ENCODE measurements at regions of chr1 and their contacts with region 1.

Region 1: DNA sequence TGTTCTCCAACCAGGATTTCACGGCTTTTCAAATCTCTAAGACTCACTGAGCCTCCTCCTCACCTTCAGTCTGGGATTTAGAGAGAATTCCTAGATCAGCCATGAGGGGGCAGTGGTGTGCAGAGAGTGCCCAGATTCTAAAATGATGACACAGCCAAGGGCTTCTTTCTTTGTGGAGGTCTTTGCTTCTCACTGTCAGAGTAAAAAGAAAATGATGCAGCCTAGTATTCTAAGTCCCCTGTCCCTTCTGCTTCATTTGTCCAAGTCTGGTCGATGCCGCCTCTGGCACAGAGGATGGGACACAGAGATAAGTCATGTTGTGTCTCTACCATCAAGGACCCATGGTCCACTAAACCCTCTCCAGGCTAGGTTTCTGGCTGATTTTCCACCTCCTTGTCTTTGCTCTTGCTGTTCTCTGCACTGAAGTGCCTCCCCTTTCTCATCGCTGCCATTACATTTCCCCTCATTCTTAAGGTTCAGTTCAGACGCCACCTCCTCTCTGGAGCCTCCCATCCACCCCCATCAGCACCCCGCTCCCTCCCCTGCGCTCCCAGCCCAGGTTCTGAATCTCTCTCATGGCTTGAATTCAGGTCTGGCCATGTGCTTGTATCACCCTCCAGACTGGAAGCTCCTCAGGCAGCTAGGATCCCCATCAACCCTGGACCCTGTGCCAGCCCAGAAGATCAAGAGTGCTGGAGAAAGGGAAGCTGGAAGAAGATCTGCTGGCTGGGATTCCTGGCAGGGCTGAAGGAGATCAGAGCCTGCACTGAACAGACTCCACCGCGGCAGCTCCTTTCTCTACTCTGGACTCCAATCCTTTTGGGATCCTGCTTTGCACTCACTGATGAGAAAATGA is 12.0 kb upstream of the TINAGL1 start:
- DNase-seq: peak; percentile 79
- H3K4me3 ChIP-seq: no peak overlapping the region
- H3K27ac ChIP-seq: no peak overlapping the region
- H3K4me1 ChIP-seq: peaks cover 0 to 6% of the 10 kb centered on the region in 2 experiments; a peak in 1 of 4 replicates
- H3K27me3 ChIP-seq: no peaks in the 10 kb centered on the region
- CTCF ChIP-seq: peak; percentile 90
- EP300 ChIP-seq: no peak
- RAD21 ChIP-seq: peak; percentile 94

Region 2: DNA sequence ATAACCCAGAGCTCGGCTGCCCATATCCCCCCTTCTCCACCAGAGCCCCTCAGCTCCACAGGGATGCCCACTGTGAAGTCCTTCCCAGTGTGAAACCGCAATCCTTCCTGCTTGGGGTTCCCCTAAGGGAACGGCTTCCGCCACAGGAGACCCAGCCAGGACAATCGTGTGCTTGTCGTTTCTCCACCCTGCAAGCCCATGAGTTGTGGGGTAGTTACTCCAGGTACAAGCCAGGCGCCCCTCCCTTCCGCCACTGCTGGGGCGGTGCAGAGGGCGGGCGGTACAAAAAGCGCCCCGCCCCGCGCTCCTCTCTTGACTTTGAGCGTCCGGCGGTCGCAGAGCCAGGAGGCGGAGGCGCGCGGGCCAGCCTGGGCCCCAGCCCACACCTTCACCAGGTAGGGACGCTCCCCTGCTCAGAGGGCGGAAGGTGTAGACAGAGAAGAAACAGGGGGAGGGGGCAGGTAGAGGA is 11.9 kb after region 1 on chr1 and contains the start of gene TINAGL1:
- CTCF ChIA-PET with region 1: interaction called, 15 read pairs
- POLR2A ChIA-PET with region 1: no interaction called
- DNase-seq: no peak
- H3K4me3 ChIP-seq: no peak within 1 kb of the TSS
- H3K27ac ChIP-seq: no peak within 1 kb of the TSS
- H3K4me1 ChIP-seq: peaks cover 14 to 17% of the 10 kb centered on the region in 2 experiments; a peak in 3 of 4 replicates
- H3K27me3 ChIP-seq: no peaks in the 10 kb centered on the region
- CTCF ChIP-seq: no peak
- EP300 ChIP-seq: no peak
- RAD21 ChIP-seq: no peak
- polyA plus RNA-seq, gene TINAGL1: 0.23 TPM in 1 of 2 replicates, not detected in the other

Region 3: DNA sequence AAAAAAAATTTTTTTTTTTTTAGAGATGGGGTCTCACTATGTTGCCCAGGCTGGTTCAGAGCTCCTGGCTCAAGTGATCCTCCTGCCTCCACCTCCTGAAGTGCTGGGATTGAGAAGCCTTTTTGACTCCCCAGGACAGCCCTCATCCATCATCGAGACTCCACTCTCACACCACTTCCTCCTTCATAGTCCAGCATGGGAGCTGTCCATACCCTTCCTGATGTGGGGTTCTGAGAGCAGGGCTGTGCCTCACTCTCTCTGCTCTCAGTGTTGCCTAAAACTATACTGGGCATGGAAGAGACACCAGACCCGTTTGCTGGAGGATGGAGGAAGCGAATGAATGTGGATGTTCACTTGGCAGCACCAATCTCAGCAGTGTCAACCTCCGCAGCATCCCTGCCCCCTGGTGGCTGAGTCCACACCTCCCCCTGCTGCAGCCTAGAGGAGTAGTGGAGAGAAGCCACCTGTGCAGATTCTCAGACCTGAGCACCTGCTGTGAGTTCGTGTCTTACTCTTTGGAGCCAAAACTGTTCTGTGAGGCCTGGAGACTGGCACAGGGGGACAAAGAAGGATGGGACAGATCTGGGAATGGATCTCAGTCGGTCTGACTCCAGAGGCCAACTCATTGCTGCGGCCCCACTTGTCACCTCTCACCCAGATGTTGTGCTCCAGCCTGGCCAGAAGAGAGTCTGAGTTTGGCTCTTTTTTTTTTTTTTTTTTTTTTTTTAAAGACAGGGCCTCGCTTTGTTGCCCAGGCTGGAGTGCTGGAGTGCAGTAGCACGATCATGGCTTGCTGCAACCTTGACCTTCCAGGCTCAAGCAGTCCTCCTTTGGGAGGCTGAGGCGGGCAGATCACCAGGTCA is 29.6 kb after region 1 on chr1:
- CTCF ChIA-PET with region 1: interaction called, 32 read pairs
- POLR2A ChIA-PET with region 1: no interaction called
- DNase-seq: peak; percentile 76
- H3K4me3 ChIP-seq: peak overlapping the region in 1 of 2 experiments; percentile 0; a peak in 1 of 4 replicates
- H3K27ac ChIP-seq: no peak overlapping the region
- H3K4me1 ChIP-seq: peaks cover 9 to 10% of the 10 kb centered on the region in 2 experiments
- H3K27me3 ChIP-seq: no peaks in the 10 kb centered on the region
- CTCF ChIP-seq: peak; percentile 90
- EP300 ChIP-seq: no peak
- RAD21 ChIP-seq: peak; percentile 72

Region 4: GRCh38 chr1:31626223-31627207 is 62.2 kb after region 1 on chr1:
- CTCF ChIA-PET with region 1: interaction called, 11 read pairs
- POLR2A ChIA-PET with region 1: no interaction called
- DNase-seq: no peak
- H3K4me3 ChIP-seq: no peak overlapping the region; a peak in 1 of 4 replicates
- H3K27ac ChIP-seq: peak overlapping the region; percentile 37 to 99
- H3K4me1 ChIP-seq: peaks cover 5 to 58% of the 10 kb centered on the region in 2 experiments; a peak in 3 of 4 replicates
- H3K27me3 ChIP-seq: no peaks in the 10 kb centered on the region
- CTCF ChIP-seq: no peak
- EP300 ChIP-seq: no peak
- RAD21 ChIP-seq: no peak

Region 5: DNA sequence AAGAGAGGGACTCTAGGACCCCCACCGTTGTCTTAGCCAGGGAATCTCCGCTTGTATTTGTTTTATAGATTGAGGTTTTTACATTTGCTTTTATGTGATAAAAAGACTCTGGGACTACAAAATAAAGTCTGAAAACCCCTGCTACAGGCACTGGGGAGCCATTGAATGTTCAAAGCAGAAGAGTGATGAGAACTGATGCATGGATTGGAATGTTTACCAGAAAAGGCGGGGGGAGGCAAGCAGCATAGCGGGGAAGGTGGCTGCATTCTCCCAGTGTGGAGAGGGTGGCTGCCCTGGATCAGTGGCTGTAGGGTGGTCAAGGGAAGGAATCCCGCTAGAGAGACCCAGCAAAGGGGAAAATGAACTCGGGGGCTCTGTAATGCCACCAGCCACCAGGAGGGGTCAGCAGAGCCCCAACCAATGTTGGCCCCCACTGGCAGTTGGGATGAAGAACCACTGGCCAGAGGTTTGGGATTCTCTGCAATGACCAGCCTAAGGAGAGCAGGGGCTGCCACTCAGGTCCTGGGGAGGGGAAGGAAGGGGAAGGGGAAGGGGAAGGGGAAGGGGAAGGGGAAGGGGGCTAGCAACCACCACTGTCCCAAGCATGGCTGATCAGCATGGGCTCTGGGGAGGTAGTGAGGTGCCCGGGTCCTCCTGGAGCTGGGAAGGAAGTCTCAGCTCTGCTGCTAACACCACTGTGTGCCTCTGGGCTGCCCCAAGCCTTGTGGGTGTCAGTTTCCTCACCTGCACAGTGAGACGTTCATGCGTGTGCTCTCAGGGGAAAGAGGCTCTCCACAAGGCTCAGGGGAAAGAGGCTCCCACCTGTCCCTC is 99.5 kb after region 1 on chr1:
- CTCF ChIA-PET with region 1: interaction called, 13 read pairs
- POLR2A ChIA-PET with region 1: no interaction called
- DNase-seq: peak; percentile 93
- H3K4me3 ChIP-seq: no peak overlapping the region; a peak in 1 of 4 replicates
- H3K27ac ChIP-seq: no peak overlapping the region
- H3K4me1 ChIP-seq: peaks cover 7 to 20% of the 10 kb centered on the region in 2 experiments; a peak in 2 of 4 replicates
- H3K27me3 ChIP-seq: no peaks in the 10 kb centered on the region
- CTCF ChIP-seq: peak; percentile 90
- EP300 ChIP-seq: no peak
- RAD21 ChIP-seq: peak; percentile 94

Measured in SK-N-SH (cell line).